Uterus (tissue), 4 donors: ENCODE measurements at regions of chr10 and their contacts with region 1.

Region 1: GRCh38 chr10:69506834-69507721 is 55.8 kb downstream of the TSPAN15 start:
- DNase-seq: peak in 1 of 2 donors; percentile 18
- H3K4me3 ChIP-seq: no peak overlapping the region
- H3K27ac ChIP-seq: peak overlapping the region; percentile 58 to 61
- H3K4me1 ChIP-seq: peaks cover 0 to 4% of the 10 kb centered on the region in 2 donors
- H3K27me3 ChIP-seq: no peaks in the 10 kb centered on the region
- CTCF ChIP-seq: no peak
- POLR2A ChIP-seq: no peak

Region 2: GRCh38 chr10:69425511-69426298 is 81.4 kb before region 1 on chr10:
- intact Hi-C with region 1: loop called (anchors 5 kb)
- DNase-seq: no peak
- H3K4me3 ChIP-seq: no peak overlapping the region
- H3K27ac ChIP-seq: peak overlapping the region; percentile 52 to 65
- H3K4me1 ChIP-seq: no peaks in the 10 kb centered on the region
- H3K27me3 ChIP-seq: no peaks in the 10 kb centered on the region
- CTCF ChIP-seq: no peak
- POLR2A ChIP-seq: no peak

Region 3: DNA sequence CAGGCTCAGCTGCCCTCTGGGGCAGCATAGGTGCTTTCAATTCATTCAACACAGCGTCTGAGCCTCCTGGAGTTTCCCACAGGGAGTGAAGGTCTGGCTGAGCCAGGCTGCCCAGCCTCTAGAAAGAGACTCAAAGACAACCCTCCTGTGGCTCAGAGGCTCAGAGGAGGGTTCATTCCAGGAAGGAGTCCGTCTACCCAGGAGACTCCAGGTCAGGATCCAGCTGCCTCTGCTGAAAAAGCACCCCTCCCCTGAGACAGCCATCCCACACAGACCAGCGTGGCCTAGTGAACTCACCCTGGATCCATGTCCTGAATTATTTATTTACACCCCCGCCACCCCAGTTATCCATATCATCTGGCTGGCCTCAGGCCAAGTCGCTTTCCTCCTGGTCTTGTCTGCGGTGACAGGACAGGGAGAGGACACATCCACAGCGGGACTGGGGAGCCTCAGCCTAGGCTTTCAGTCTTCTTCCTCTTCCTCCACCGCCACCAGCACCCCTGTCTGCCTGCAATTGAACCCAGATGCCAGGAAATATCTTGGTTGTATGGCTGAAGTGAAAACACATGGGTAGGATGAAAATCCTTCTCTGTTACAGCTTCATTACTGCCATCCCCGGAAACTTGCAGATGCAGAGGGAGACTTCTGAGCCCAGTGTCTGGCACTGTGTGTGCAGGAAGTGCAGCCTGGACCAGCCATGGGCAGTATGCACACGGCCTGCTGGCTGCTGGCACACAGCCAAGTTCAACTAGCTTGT is 250.7 kb after region 1 on chr10:
- intact Hi-C with region 1: no loop called
- DNase-seq: peak in 1 of 2 donors; percentile 21
- H3K4me3 ChIP-seq: no peak overlapping the region
- H3K27ac ChIP-seq: no peak overlapping the region
- H3K4me1 ChIP-seq: no peaks in the 10 kb centered on the region
- H3K27me3 ChIP-seq: no peaks in the 10 kb centered on the region
- CTCF ChIP-seq: no peak
- POLR2A ChIP-seq: no peak